Activated naive CD4-positive, alpha-beta T cell treated with anti-CD3 and anti-CD28 coated beads for 36 hours (primary cell): ENCODE measurements at regions of chr6 and their contacts with region 1.

Region 1: DNA sequence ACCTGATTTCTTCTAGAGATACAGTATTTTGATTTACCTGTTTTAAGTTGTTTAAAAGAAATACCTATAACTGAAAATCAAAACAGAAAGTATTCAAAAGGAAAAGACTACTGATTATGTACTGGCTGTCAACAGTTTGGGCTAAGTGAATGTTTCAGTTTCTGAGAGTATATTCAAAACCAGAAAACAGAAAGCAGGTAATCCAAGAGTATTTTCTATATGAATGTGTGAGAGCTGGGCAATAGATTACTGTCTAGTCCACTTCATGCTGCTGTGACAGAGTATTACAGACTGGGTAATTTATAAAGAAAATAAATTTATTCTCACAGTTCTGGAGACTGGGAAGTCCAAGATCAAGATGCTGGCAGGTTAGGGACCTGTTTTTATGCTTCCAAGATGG is 261.0 kb downstream of the ARHGAP18 start:
- DNase-seq: no peak
- H3K4me3 Mint-ChIP-seq: no peak overlapping the region
- H3K27ac Mint-ChIP-seq: peak overlapping the region; percentile 37
- H3K4me1 Mint-ChIP-seq: peaks cover 80% of the 10 kb centered on the region
- H3K27me3 Mint-ChIP-seq: no peaks in the 10 kb centered on the region

Region 2: DNA sequence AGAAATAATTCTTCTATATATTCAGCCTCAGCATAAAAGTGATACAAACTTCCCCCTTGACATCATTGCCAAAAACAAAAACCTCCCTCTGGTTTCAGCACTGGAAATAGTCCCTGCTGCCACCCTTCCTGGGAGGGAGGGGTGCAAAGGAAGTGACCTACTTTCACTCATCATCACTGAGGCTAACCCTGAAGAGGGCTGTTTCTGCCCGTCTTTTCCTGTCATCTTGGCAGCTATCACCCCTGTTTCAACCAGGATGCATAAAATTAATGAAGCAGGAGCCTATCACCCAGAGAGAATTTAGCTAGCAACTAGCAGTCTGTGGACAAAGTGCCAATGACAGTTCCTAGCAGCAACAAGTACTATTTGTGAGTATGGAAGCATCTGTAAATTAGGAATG is 168.2 kb before region 1 on chr6:
- CTCF ChIA-PET with region 1: no interaction called
- intact Hi-C with region 1: loop called (anchors 5 kb)
- DNase-seq: peak; percentile 76
- H3K4me3 Mint-ChIP-seq: peak overlapping the region; percentile 52
- H3K27ac Mint-ChIP-seq: peak overlapping the region; percentile 10
- H3K4me1 Mint-ChIP-seq: peaks cover 14% of the 10 kb centered on the region
- H3K27me3 Mint-ChIP-seq: no peaks in the 10 kb centered on the region

Region 3: DNA sequence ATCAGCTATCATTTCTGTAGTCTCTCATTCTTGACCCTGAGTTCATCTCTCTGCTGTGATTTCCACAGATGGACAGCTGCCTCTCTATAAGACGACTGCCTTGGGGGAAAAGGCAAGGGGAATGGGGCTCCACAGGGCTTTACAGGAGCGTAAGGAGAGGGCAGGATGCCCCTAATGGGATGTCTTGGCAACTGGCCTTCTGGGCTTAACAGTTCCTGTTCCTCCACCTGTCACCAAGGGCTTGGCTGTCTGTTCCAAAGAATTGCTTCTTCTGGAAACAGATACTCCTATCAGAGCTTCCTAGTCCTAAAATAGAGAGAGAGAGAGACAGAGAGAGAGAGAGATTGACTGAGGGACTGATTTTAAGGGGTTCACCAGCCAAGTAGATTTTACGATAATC is 1098.8 kb after region 1 on chr6:
- CTCF ChIA-PET with region 1: no interaction called
- intact Hi-C with region 1: no loop called
- DNase-seq: no peak
- H3K4me3 Mint-ChIP-seq: no peak overlapping the region
- H3K27ac Mint-ChIP-seq: no peak overlapping the region
- H3K4me1 Mint-ChIP-seq: no peaks in the 10 kb centered on the region
- H3K27me3 Mint-ChIP-seq: no peaks in the 10 kb centered on the region